B cell (primary cell): ENCODE measurements at regions of chr4 and their contacts with region 1.

Region 1: DNA sequence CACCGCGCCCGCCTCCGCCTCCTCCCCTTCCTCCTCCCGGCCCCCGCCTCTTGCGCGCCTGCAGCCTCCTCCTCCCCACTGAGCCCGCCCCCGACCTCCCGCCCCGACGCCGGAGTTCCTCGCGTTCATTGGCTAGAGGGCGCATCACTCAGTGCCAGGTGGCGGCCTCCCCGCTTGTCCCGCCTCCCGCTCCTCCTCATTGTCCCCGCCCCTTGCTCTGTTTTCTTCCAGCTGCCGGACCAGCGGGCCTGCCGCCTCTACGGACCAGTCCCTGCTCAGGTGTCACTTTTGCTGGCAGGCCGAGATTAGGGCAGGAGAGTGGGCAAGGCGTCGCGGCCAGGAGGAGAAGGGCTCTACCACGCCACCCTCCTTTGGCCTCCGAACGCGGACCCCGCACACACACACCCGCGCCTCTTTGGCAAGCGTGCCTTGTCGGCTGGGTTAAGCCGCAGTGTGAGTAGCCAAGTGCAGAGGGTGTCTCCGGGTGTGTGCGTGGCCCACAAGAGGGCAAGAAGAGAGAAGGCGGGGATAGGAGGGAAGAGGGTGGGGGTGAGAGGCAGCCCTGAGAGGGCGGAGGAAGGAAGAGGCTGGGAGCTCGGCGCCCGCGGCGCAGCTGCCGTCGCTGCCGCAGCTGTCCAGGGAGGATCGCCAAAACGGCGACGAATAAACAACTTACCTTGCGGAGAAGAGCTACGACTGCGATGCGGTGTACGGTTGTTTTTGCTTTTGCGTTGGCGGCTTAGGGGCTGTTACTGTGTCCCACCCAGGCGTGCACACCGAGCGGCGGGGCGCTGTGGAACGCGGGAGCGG is 436 bp upstream of the PPP3CA start:
- DNase-seq: peak; percentile 98
- ATAC-seq: peak; percentile 80
- H3K4me3 ChIP-seq: peak overlapping the region; percentile 77 to 96 (median 95)
- H3K4me3 Mint-ChIP-seq: peak overlapping the region; percentile 99
- H3K27ac ChIP-seq: peak overlapping the region; percentile 85 to 87
- H3K27ac Mint-ChIP-seq: peak overlapping the region; percentile 95
- H3K4me1 ChIP-seq: peaks cover 22 to 36% of the 10 kb centered on the region in 2 donors
- H3K4me1 Mint-ChIP-seq: peaks cover 42% of the 10 kb centered on the region
- H3K27me3 ChIP-seq: no peaks in the 10 kb centered on the region
- H3K27me3 Mint-ChIP-seq: no peaks in the 10 kb centered on the region
- CTCF ChIP-seq: no peak

Region 2: DNA sequence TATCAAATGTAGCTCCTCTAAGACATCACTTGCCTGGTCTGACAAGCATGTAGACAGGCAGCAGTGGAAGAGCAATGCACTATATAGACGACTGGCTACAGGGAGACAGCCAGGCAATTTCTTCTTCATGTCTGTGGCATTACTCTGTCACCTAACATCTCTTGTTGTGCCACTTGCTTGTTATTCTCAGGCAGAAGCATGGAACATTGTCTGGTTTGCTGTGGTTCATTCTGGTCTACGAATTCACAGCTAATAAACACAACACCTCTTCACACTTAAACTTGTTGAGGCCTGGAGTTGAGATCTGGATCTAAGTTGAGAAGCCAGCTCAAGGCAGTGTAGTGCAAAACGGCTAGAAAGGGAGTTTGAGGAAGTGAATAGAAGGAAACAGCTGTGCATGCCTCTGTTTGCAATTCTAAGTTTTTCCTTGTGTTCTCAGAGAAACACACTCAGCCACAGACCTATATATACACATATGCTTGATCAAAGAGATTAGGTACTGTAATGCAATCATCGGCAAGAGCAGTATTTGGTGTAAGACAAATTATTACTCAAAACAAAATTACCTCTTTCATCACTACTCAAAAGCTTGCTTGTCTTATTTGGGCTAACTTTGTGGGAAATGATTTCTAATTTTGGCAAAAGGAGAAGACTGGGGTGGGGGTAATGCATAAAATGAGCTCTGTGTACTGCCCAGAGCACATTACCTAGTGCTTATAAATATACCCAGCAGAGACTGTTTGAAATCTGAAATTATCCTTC is 244.2 kb before region 1 on chr4:
- CTCF ChIA-PET with region 1: no interaction called
- POLR2A ChIA-PET with region 1: interaction called, 3 read pairs
- intact Hi-C with region 1: loop called (anchors 5 kb)
- DNase-seq: peak; percentile 57
- ATAC-seq: peak; percentile 86
- H3K4me3 ChIP-seq: peak overlapping the region in 1 of 5 experiments; percentile 35
- H3K4me3 Mint-ChIP-seq: peak overlapping the region; percentile 54
- H3K27ac ChIP-seq: peak overlapping the region; percentile 34 to 74
- H3K27ac Mint-ChIP-seq: peak overlapping the region; percentile 91
- H3K4me1 ChIP-seq: peaks cover 34 to 37% of the 10 kb centered on the region in 2 donors
- H3K4me1 Mint-ChIP-seq: peaks cover 51% of the 10 kb centered on the region
- H3K27me3 ChIP-seq: no peaks in the 10 kb centered on the region
- H3K27me3 Mint-ChIP-seq: no peaks in the 10 kb centered on the region
- CTCF ChIP-seq: no peak

Region 3: DNA sequence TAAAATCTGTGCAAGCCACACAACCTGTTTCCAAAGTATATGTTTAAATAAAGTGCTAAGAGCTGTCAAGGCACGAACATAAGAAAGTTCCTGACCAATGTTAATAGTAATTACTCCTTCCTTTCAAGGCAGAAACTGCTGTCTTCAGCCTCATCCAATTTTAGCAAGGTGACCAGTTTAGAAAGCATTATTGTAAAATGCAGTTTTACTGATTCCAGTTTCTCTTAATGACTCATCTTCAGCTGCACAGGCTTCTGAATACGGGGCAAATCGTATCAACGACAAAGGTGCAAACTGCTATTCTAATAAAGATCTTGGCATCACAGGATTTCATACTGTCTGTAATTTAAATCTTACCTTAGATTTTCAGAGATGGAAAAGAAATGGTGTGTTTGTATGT is 87.9 kb before region 1 on chr4:
- CTCF ChIA-PET with region 1: no interaction called
- POLR2A ChIA-PET with region 1: interaction called, 6 read pairs
- intact Hi-C with region 1: loop called (anchors 5 kb)
- DNase-seq: no peak
- ATAC-seq: no peak
- H3K4me3 ChIP-seq: no peak overlapping the region
- H3K4me3 Mint-ChIP-seq: peak overlapping the region; percentile 11
- H3K27ac ChIP-seq: peak overlapping the region in 1 of 2 donors; percentile 74
- H3K27ac Mint-ChIP-seq: peak overlapping the region; percentile 46
- H3K4me1 ChIP-seq: peaks cover 36 to 74% of the 10 kb centered on the region in 2 donors
- H3K4me1 Mint-ChIP-seq: peaks cover 88% of the 10 kb centered on the region
- H3K27me3 ChIP-seq: no peaks in the 10 kb centered on the region
- H3K27me3 Mint-ChIP-seq: no peaks in the 10 kb centered on the region
- CTCF ChIP-seq: no peak

Region 4: GRCh38 chr4:101730291-101731117 is 382.7 kb after region 1 on chr4:
- CTCF ChIA-PET with region 1: interaction called, 6 read pairs
- POLR2A ChIA-PET with region 1: no interaction called
- intact Hi-C with region 1: loop called (anchors 1 kb)
- DNase-seq: peak; percentile 73
- ATAC-seq: peak; percentile 90
- H3K4me3 ChIP-seq: no peak overlapping the region
- H3K4me3 Mint-ChIP-seq: no peak overlapping the region
- H3K27ac ChIP-seq: no peak overlapping the region
- H3K27ac Mint-ChIP-seq: peak overlapping the region; percentile 13
- H3K4me1 ChIP-seq: peaks cover 6 to 9% of the 10 kb centered on the region in 2 donors
- H3K4me1 Mint-ChIP-seq: peaks cover 14% of the 10 kb centered on the region
- H3K27me3 ChIP-seq: no peaks in the 10 kb centered on the region
- H3K27me3 Mint-ChIP-seq: no peaks in the 10 kb centered on the region
- CTCF ChIP-seq: peak; percentile 80

Region 5: GRCh38 chr4:101977076-101977475 is 629.3 kb after region 1 on chr4:
- CTCF ChIA-PET with region 1: no interaction called
- POLR2A ChIA-PET with region 1: no interaction called
- intact Hi-C with region 1: loop called (anchors 10 kb)
- DNase-seq: no peak
- ATAC-seq: no peak
- H3K4me3 ChIP-seq: no peak overlapping the region
- H3K4me3 Mint-ChIP-seq: no peak overlapping the region
- H3K27ac ChIP-seq: peak overlapping the region in 1 of 2 donors; percentile 53
- H3K27ac Mint-ChIP-seq: peak overlapping the region; percentile 77
- H3K4me1 ChIP-seq: peaks cover 10 to 22% of the 10 kb centered on the region in 2 donors
- H3K4me1 Mint-ChIP-seq: peaks cover 62% of the 10 kb centered on the region
- H3K27me3 ChIP-seq: no peaks in the 10 kb centered on the region
- H3K27me3 Mint-ChIP-seq: no peaks in the 10 kb centered on the region
- CTCF ChIP-seq: no peak